Posterior cingulate gyrus (tissue), 11 donors: ENCODE measurements at regions of chr12 and their contacts with region 1.

Region 1: DNA sequence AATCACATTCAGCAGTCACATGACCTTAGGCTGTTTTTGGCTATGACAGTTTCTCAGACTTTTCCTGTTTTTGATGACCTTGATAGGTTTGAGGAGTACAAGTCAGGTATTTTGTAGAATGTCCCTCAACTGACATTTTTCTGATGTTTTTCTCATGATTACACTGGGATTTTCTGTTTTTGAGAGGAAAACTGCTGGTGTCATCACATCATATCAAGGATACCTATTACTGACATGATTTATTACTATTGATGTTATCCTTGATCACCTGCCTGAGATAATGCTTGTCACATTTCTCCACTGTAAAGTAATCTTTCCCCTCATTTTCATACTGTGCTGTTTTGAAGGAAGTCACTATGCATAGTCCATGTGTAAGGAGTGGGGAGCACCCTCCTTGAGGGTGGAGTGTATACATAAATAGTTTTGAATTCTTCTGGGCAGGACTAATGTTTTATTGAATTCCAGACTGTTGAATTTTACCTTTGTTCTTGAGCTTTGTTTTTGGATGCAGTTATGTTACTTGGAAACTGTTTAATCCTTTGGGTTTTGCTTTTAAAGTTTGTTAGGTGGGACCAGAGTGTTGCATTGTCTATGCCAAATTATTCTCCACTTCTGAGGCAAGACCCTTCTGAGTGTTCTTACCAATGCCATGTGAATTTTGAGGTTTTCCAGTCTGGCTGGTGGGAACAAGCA is 444.5 kb upstream of the FAR2 start:
- DNase-seq: no peak

Region 2: DNA sequence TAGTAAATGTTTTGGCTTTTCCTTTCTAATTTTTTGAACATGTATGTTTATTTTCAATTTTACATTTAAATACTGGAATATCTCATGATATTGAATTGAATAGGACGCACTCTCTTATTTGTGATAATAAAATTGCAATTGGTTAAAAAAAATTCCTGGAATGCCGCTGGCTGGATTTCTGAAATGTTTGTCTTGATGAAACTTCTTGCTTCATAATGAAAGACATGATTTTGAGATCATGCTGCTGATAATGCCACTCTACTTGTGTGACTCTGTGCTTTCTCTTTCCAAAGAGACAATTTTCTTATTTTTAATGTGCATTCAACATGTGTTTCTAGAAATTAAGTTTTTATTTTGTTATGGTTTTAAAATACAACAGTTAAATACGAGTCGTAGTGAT is 21.3 kb before region 1 on chr12:
- intact Hi-C with region 1: loop called (anchors 2 kb)
- DNase-seq: no peak